Activated naive CD4-positive, alpha-beta T cell treated with anti-CD3 and anti-CD28 coated beads for 36 hours (primary cell): ENCODE measurements at regions of chr9 and their contacts with region 1.

Region 1: DNA sequence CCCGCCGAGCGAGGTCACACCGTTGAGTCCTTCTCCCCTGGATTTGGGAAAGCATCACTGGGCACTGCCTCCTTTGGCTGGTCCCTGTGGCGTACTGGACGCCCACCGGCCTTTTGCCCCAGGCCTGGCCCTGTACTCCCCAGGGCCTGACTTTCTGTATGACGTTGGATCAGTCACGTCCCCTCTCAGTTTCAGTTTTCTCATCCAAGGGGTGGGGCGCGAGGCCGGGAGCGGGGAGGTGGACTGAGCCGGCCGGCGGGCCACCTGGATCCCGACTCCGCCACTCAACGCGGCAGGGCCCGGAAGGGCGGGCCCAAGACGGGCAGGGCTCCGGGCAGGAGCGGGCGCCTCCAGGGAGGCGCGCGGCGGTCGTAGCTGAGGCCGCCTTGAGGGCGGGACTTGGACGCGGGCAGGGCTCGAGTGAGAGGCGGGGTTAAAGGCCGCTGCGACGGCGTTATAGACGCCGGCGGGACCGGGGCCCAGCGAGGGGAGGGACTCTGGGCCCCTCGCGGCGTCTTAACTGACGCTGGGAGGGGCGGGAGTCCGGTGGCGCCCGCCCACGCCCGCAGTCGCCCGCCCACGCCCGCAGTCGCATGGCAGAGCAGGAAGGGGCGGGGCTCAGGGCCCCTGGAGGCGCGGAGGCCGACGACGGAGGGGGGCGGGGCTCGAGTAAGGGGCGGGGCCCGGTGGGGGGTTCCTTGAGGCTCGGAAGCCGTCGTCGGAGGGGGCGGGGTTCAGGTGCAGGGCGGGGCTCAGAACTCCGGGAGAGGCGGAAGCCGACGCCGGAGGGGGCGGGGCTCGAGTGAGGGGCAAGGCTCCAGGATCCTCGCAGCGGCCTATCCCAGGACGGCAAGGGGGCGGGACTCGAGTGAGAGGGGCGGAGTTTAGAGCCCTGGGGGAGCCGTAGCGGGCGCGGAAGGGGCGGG is 549 bp upstream of the CARD19 start:
- DNase-seq: peak; percentile 100
- H3K4me3 Mint-ChIP-seq: peak overlapping the region; percentile 84
- H3K27ac Mint-ChIP-seq: peak overlapping the region; percentile 95
- H3K4me1 Mint-ChIP-seq: peaks cover 74% of the 10 kb centered on the region
- H3K27me3 Mint-ChIP-seq: no peaks in the 10 kb centered on the region

Region 2: GRCh38 chr9:92501671-92502393 is 593.6 kb before region 1 on chr9:
- CTCF ChIA-PET with region 1: no interaction called
- intact Hi-C with region 1: no loop called
- DNase-seq: peak; percentile 11
- H3K4me3 Mint-ChIP-seq: no peak overlapping the region
- H3K27ac Mint-ChIP-seq: no peak overlapping the region
- H3K4me1 Mint-ChIP-seq: peaks cover 3% of the 10 kb centered on the region
- H3K27me3 Mint-ChIP-seq: no peaks in the 10 kb centered on the region

Region 3: DNA sequence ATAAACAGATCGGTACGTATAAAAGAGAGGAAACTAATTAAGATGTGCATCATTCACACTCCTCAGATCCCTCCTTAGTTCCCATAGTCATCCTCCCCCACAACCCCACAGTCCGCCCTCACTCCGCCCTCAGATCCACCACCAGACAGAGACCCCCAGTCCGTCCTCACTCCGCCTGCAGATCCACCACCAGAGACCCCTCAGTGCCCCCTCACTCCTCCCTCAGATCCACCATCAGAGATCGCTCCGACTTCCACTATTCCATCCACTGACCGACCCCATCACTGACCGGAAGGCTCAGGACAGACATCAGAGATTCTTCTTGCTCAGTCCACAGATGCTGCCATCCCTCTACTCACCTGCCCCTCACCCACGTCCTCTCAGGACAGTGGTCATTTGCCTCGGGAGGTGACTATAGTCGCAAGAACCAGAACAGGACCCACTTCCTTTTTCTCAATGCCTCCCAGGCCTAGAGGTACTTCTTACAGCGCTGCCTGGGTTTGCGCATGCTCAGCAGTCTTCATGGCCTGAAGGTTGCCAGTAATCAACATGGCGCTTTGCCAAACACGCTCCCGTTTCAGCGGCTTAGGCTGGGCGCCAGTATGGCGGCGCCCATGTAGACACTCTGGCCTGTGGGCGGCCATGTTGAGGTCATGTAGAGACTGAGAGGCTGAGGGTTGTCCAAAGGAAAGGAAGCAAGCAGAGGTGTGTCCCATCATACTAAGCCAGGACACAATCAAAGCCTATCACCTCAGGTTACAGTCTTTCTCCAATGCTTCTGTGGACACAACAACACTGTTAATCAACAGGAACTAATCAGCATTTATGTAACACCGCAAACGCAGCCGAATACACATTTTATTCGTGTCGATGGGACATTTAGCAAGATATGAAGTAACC is 217.7 kb before region 1 on chr9 and contains the start of gene ZNF484:
- CTCF ChIA-PET with region 1: no interaction called
- intact Hi-C with region 1: loop called (anchors 5 kb)
- DNase-seq: peak; percentile 99
- H3K4me3 Mint-ChIP-seq: peak within 1 kb of the TSS; percentile 87
- H3K27ac Mint-ChIP-seq: peak within 1 kb of the TSS; percentile 94
- H3K4me1 Mint-ChIP-seq: peaks cover 40% of the 10 kb centered on the region
- H3K27me3 Mint-ChIP-seq: no peaks in the 10 kb centered on the region
- total RNA-seq, gene ZNF484: 5.8 to 6.5 TPM

Region 4: GRCh38 chr9:93003552-93004407 is 91.7 kb before region 1 on chr9:
- CTCF ChIA-PET with region 1: interaction called, 3 read pairs
- intact Hi-C with region 1: loop called (anchors 1 kb)
- DNase-seq: peak; percentile 82
- H3K4me3 Mint-ChIP-seq: no peak overlapping the region
- H3K27ac Mint-ChIP-seq: peak overlapping the region; percentile 90
- H3K4me1 Mint-ChIP-seq: peaks cover 54% of the 10 kb centered on the region
- H3K27me3 Mint-ChIP-seq: no peaks in the 10 kb centered on the region

Region 5: DNA sequence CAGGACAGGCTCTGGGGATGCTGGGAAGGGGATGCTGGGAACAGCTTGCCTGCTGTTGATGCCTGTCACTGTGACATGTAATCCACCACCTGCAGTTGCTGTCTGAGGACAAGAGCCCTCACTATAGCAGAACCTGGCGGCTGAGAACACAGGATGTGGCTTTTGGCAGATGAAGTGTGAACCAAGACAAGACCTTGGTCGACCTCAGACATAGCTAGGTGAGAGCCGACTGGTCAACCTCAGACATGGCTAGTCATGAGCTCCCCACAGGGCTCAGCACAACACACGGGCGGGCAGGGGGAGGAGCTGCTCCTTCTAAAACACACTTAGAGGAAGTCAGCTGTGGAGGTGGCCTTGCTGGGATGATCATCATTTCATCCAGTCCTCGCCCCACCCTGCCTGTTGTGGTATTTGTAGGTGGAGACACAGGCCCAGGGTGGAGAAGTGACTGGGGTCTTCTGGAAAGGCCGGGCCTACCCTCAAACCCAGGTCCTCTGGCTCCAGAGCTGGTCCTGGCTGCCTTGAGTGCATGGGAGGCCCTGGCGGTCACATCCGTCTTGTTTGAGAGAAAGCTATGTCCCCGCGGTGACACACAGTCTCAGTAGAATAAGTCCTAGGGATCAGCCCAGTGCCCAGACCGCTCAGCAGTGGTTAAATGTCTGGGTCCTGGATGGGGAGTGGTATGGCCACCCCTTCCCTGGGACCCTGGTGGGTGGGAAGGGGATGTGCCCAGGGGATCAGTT is 30.9 kb before region 1 on chr9:
- CTCF ChIA-PET with region 1: interaction called, 9 read pairs
- intact Hi-C with region 1: loop called (anchors 1 kb)
- DNase-seq: peak; percentile 98
- H3K4me3 Mint-ChIP-seq: peak overlapping the region; percentile 86
- H3K27ac Mint-ChIP-seq: peak overlapping the region; percentile 99
- H3K4me1 Mint-ChIP-seq: peaks cover 91% of the 10 kb centered on the region
- H3K27me3 Mint-ChIP-seq: no peaks in the 10 kb centered on the region

Region 6: GRCh38 chr9:93134015-93134739 is 38.7 kb after region 1 on chr9 and contains the start of gene NINJ1:
- CTCF ChIA-PET with region 1: no interaction called
- intact Hi-C with region 1: loop called (anchors 1 kb)
- DNase-seq: peak; percentile 96
- H3K4me3 Mint-ChIP-seq: peak within 1 kb of the TSS; percentile 94
- H3K27ac Mint-ChIP-seq: peak within 1 kb of the TSS; percentile 91
- H3K4me1 Mint-ChIP-seq: peaks cover 67% of the 10 kb centered on the region
- H3K27me3 Mint-ChIP-seq: no peaks in the 10 kb centered on the region
- total RNA-seq, gene NINJ1: 93.9 to 96.9 TPM

Region 7: DNA sequence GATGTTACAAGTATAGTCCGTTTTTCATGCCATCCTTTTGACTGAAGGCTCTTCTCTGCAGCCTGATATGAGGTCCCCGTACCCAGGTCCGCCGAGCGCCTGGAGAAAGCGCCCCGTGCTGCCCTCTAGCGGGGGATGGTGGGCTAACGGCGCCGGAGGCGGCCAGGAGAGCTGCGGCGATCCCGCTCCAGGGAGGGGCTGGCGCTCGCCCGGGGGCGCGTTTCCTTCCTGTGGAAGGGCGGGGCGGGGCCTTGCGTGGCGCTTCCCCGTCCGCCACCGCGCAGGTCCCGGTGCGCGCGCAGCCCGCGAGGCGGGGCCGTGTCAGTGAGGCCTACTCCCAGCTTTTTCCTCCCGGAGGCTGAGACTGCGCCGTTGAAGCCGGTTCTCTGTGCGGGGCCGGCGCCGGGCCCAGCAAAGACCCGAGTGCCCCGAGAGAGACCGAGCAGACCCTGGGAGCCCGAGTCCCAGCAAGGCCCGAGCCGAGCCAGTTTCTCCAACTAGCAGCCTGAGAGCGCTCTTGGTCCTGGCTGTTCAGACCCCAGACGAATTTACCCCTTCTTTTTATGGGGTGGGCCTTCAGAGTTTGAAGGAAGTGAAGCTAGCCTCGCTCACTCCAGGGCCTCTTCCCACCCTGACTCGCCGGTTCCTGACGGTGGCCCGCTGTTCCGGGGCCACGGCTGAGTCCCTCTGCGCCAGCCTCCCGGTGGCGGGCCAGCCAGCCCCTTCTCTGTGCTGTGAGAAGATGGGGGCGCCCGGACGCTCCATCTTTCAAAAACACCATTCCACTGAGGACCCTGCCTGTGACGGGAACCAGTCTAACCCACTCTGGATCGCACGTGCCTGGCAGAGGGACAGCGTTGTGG is 471.2 kb after region 1 on chr9:
- CTCF ChIA-PET with region 1: no interaction called
- intact Hi-C with region 1: loop called (anchors 5 kb)
- DNase-seq: peak; percentile 99
- H3K4me3 Mint-ChIP-seq: peak overlapping the region; percentile 90
- H3K27ac Mint-ChIP-seq: peak overlapping the region; percentile 92
- H3K4me1 Mint-ChIP-seq: peaks cover 26% of the 10 kb centered on the region
- H3K27me3 Mint-ChIP-seq: no peaks in the 10 kb centered on the region